Pancreas (tissue), 10 donors: ENCODE measurements at regions of chr1 and their contacts with region 1.

Region 1: DNA sequence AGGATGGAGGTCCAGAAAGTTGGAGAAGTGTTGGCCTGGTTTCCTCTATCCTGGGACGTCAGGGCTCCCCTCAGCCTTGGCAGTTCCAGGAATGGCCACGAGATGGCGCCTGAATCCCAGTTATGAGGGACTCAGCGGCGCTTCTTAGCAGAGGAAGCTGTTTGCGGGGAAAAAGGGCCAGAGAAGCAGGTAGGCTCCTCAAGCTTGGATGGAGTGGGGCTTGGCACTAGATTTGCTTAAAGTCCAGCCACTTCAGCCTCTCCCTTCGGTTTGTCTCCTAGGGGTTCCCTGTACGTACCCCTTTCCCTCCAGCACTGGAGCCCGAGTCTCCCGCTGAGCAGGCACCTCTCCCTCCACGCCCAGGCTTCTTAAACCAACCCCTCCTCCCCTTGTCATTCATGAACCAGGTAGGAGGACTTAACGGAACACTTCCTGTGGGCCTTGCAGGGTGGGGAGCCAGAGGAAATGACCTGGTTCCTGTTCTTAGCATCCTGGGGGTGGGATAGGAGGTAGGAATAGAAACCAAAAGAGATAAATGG is 32.0 kb upstream of the TENT5B start:
- DNase-seq: peak; percentile 73 to 99 (median 92)
- ATAC-seq: peak; percentile 94 to 98 (median 96)
- H3K4me3 ChIP-seq: peak overlapping the region in 1 of 4 donors; percentile 10
- H3K27ac ChIP-seq: no peak overlapping the region
- H3K4me1 ChIP-seq: peaks cover 0 to 3% (median 0%) of the 10 kb centered on the region in 3 donors
- H3K27me3 ChIP-seq: no peaks in the 10 kb centered on the region
- CTCF ChIP-seq: peak; percentile 98 to 99 (median 98)

Region 2: GRCh38 chr1:27090911-27091310 is 46.2 kb after region 1 on chr1:
- intact Hi-C with region 1: loop called in 2 of 3 experiments (anchors 5 kb)
- DNase-seq: no peak
- ATAC-seq: no peak
- H3K4me3 ChIP-seq: no peak overlapping the region
- H3K27ac ChIP-seq: no peak overlapping the region
- H3K4me1 ChIP-seq: no peaks in the 10 kb centered on the region
- H3K27me3 ChIP-seq: no peaks in the 10 kb centered on the region
- CTCF ChIP-seq: no peak